H1 (cell line): ENCODE measurements at regions of chr2 and their contacts with region 1.

Region 1: GRCh38 chr2:152555048-152555447 is 162.2 kb downstream of the PRPF40A start:
- DNase-seq: no peak
- H3K4me3 ChIP-seq: no peak overlapping the region
- H3K27ac ChIP-seq: no peak overlapping the region
- H3K4me1 ChIP-seq: peaks cover 0 to 11% (median 5%) of the 10 kb centered on the region in 4 experiments; a peak in 2 of 7 replicates
- H3K27me3 ChIP-seq: peaks cover 0 to 2% (median 0%) of the 10 kb centered on the region in 4 experiments; a peak in 1 of 7 replicates
- CTCF ChIP-seq: peak in 2 of 3 experiments; percentile 39 to 48; a peak in 3 of 4 replicates
- EP300 ChIP-seq: no peak
- POLR2A ChIP-seq: no peak
- RAD21 ChIP-seq: peak; percentile 68 to 72

Region 2: DNA sequence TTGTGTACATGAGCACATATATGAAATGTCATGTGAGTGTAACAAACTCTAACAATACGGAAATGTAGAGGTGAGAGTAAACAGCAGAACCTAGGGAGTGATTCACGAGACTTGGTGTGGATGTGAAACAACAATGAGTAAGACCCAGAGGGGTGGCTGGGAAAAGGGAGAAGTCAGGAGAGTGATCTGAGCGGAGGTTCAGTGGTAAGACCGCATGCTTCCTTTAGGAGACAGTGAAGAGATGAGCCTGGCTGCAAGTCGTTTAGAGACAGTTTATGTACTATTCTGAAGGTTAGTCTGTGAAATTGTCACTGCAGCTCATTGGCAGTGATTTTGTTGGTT is 11.7 kb after region 1 on chr2:
- CTCF ChIA-PET with region 1: interaction called, 12 read pairs
- POLR2A ChIA-PET with region 1: no interaction called
- DNase-seq: no peak
- H3K4me3 ChIP-seq: no peak overlapping the region
- H3K27ac ChIP-seq: no peak overlapping the region
- H3K4me1 ChIP-seq: peaks cover 0 to 3% (median 0%) of the 10 kb centered on the region in 4 experiments; a peak in 2 of 7 replicates
- H3K27me3 ChIP-seq: no peaks in the 10 kb centered on the region
- CTCF ChIP-seq: no peak
- EP300 ChIP-seq: no peak
- POLR2A ChIP-seq: no peak
- RAD21 ChIP-seq: no peak

Region 3: GRCh38 chr2:152585830-152586484 is 30.9 kb after region 1 on chr2:
- CTCF ChIA-PET with region 1: no interaction called
- POLR2A ChIA-PET with region 1: no interaction called
- DNase-seq: no peak
- H3K4me3 ChIP-seq: no peak overlapping the region
- H3K27ac ChIP-seq: no peak overlapping the region
- H3K4me1 ChIP-seq: no peaks in the 10 kb centered on the region
- H3K27me3 ChIP-seq: no peaks in the 10 kb centered on the region
- CTCF ChIP-seq: no peak
- EP300 ChIP-seq: no peak
- POLR2A ChIP-seq: no peak
- RAD21 ChIP-seq: no peak